B cell (primary cell): ENCODE measurements at regions of chr1 and their contacts with region 1.

Region 1: DNA sequence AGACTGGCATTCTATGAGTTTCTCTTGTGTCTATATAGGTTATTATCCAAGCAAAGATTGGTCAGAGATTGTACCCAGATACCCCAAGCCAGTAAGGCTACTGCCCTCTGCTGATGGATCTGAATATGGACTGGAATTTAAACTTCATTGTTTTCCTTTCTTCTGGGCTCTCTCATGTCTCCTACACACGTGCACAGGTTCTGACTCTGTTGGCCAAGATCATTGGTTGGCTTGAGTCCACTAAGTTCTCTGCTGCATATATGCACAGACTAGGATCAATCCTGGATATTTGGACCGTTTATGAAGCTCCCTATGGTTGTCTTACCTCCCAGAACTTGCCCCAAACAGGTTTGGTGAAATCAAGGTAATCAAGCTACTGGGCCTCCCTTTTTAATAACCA is 69.7 kb downstream of the CC2D1B start:
- DNase-seq: peak; percentile 36
- ATAC-seq: no peak
- H3K4me3 ChIP-seq: no peak overlapping the region
- H3K4me3 Mint-ChIP-seq: no peak overlapping the region
- H3K27ac ChIP-seq: no peak overlapping the region
- H3K27ac Mint-ChIP-seq: no peak overlapping the region
- H3K4me1 ChIP-seq: no peaks in the 10 kb centered on the region
- H3K4me1 Mint-ChIP-seq: no peaks in the 10 kb centered on the region
- H3K27me3 ChIP-seq: no peaks in the 10 kb centered on the region
- H3K27me3 Mint-ChIP-seq: no peaks in the 10 kb centered on the region
- CTCF ChIP-seq: peak; percentile 65

Region 2: DNA sequence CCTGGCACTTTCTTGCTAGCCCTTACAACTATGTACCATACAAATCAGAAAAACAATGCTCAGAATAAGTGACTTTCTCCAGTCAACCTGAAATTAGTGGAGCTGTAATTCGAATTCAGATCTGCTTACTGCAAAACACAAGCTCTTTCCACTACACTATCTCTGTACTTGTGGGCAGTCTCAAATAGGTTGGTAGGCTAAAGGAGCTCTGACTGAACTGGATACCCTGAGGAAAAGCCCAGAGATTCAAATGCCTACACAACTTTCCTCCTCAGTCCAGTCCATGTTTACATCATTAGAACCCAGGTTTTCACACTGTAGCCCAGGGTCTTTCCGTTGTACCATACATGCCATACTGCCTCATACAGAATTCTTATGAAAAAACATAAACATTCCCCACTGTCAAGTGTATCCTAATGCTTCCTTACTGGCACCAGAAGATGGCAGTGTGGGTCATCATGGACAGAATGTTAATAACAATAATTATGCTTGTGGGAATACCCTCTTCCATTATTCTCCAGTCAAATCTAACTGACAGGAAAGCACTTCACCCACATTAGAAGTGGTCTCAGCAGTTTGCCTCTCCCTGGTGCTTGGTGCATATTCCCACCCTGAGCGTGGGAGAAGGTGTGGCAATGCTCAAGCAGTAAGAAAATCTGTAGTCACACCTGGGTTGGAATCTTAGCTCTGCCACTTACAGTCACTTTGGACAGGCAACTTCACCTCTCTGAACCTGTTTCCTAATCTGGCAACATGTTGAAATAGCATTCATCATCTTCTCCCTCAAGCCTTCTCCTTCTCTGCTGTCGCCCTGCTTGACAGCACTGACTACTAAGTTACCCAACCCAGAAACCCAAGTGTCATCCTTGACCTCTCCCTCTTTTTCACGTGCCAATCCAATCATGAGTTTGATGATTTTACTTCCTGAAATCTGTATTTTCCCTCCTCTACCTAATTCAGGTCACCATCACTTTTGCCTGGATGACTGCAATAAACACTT is 168.9 kb before region 1 on chr1:
- CTCF ChIA-PET with region 1: interaction called, 16 read pairs
- POLR2A ChIA-PET with region 1: no interaction called
- intact Hi-C with region 1: loop called (anchors 1 kb)
- DNase-seq: peak; percentile 45
- ATAC-seq: no peak
- H3K4me3 ChIP-seq: no peak overlapping the region
- H3K4me3 Mint-ChIP-seq: no peak overlapping the region
- H3K27ac ChIP-seq: no peak overlapping the region
- H3K27ac Mint-ChIP-seq: no peak overlapping the region
- H3K4me1 ChIP-seq: no peaks in the 10 kb centered on the region
- H3K4me1 Mint-ChIP-seq: peaks cover 3% of the 10 kb centered on the region
- H3K27me3 ChIP-seq: peaks cover 0 to 5% (median 4%) of the 10 kb centered on the region in 4 experiments
- H3K27me3 Mint-ChIP-seq: peaks cover 51% of the 10 kb centered on the region
- CTCF ChIP-seq: peak; percentile 50